AG04450 (cell line): ENCODE measurements at regions of chr12 and their contacts with region 1.

Region 1: DNA sequence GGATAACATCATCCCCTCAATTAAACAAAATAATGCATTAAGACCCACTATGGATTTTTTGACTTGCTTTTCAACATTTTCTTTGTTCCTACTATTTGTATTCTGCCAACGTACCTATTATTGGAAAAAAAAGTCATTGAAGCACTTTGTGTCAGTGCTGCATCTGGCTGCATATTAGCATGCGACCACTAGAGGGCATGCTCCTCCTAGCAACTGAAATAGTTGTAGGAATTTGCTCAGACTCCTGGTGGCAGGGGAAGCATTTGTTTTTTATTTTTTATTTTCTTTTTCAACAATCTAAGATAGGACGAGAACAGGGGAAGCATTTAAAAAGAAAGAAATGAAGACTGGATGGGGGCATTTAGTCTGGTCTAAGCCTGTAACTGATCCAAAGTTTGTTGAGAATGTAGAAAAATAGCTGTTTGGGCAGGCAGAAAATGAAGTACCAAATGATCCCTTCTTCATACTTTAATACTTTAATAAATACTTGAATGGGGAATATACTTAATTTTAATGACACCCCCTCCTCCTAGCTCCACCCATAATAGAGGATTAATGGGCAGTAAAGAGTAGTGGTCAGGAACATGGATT is 14.5 kb upstream of the CLEC4A start:
- DNase-seq: peak; percentile 63
- H3K4me3 ChIP-seq: no peak overlapping the region
- H3K27ac ChIP-seq: no peak overlapping the region
- H3K27me3 ChIP-seq: no peaks in the 10 kb centered on the region
- CTCF ChIP-seq: peak; percentile 100

Region 2: GRCh38 chr12:7869127-7869526 is 239.8 kb before region 1 on chr12:
- CTCF ChIA-PET with region 1: no interaction called
- POLR2A ChIA-PET with region 1: no interaction called
- DNase-seq: no peak
- H3K4me3 ChIP-seq: no peak overlapping the region
- H3K27ac ChIP-seq: no peak overlapping the region
- H3K27me3 ChIP-seq: peaks cover 7% of the 10 kb centered on the region
- CTCF ChIP-seq: no peak

Region 3: DNA sequence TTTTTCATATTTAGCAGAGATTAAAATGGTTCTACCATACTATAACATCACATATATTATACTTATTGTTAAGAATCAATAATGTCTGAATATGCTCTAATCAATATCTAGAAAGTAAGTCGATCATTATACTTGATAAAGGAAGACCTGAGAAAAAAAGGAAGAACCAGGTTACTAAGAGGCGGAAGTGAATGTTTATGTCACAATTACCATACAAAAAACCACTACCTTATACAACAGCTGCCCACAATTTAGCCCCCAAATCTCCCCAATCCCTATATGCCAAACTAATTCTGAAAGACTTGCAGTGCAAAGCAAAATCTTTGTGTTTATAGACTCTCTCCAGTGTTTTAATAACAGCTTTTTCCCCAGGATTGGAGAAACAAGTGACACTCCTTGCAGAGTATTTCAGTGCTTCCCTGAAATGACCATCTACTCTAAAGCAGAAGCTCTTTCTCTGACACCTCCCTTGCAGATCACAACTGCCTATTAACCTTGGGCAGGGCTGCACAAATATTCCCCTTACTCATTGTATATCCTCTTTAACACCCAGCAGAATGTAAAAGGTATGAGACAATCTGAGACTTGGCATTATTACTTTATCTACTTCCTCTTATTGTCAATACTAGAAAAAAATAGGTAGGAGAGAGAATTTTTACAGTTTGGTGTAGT is 160.2 kb before region 1 on chr12:
- CTCF ChIA-PET with region 1: no interaction called
- POLR2A ChIA-PET with region 1: no interaction called
- DNase-seq: no peak
- H3K4me3 ChIP-seq: no peak overlapping the region
- H3K27ac ChIP-seq: no peak overlapping the region
- H3K27me3 ChIP-seq: no peaks in the 10 kb centered on the region
- CTCF ChIP-seq: no peak

Region 4: DNA sequence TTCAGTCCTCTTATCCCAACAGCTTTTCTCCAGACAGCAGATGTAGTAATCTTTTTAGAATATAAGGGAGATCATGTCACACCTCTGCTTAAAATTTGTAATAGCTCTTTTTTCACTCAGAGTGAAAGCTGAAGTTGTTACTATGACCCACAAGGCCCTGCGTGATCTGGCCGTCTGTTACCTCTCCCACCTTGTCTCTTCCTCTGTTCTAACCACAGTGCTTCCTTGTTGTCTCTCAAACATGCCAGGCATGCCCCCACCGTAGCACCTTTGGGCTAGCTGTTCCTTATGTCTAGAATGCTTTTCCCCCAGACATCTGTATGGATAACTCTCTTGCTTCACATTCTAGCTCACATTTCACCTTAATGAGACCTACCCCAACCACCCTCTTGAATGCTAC is 20.3 kb before region 1 on chr12:
- CTCF ChIA-PET with region 1: interaction called, 10 read pairs
- POLR2A ChIA-PET with region 1: no interaction called
- DNase-seq: no peak
- H3K4me3 ChIP-seq: no peak overlapping the region
- H3K27ac ChIP-seq: no peak overlapping the region
- H3K27me3 ChIP-seq: no peaks in the 10 kb centered on the region
- CTCF ChIP-seq: no peak

Region 5: GRCh38 chr12:8120072-8120713 is 11.3 kb after region 1 on chr12:
- CTCF ChIA-PET with region 1: interaction called, 12 read pairs
- POLR2A ChIA-PET with region 1: no interaction called
- DNase-seq: no peak
- H3K4me3 ChIP-seq: no peak overlapping the region
- H3K27ac ChIP-seq: no peak overlapping the region
- H3K27me3 ChIP-seq: no peaks in the 10 kb centered on the region
- CTCF ChIP-seq: no peak

Region 6: GRCh38 chr12:8127138-8127537 is 18.2 kb after region 1 on chr12:
- CTCF ChIA-PET with region 1: interaction called, 23 read pairs
- POLR2A ChIA-PET with region 1: interaction called, 5 read pairs
- DNase-seq: no peak
- H3K4me3 ChIP-seq: no peak overlapping the region
- H3K27ac ChIP-seq: no peak overlapping the region
- H3K27me3 ChIP-seq: no peaks in the 10 kb centered on the region
- CTCF ChIP-seq: no peak

Region 7: GRCh38 chr12:8146442-8146771 is 37.5 kb after region 1 on chr12:
- CTCF ChIA-PET with region 1: interaction called, 11 read pairs
- POLR2A ChIA-PET with region 1: no interaction called
- DNase-seq: no peak
- H3K4me3 ChIP-seq: peak overlapping the region; percentile 21; the same call in 1 of the 2 replicates
- H3K27ac ChIP-seq: peak overlapping the region; percentile 66
- H3K27me3 ChIP-seq: no peaks in the 10 kb centered on the region
- CTCF ChIP-seq: no peak

Region 8: GRCh38 chr12:8156845-8157244 is 47.9 kb after region 1 on chr12 and contains the start of gene ZNF705A:
- CTCF ChIA-PET with region 1: interaction called, 17 read pairs
- POLR2A ChIA-PET with region 1: no interaction called
- DNase-seq: peak; percentile 59
- H3K4me3 ChIP-seq: no peak within 1 kb of the TSS
- H3K27ac ChIP-seq: peak within 1 kb of the TSS; percentile 74
- H3K27me3 ChIP-seq: no peaks in the 10 kb centered on the region
- CTCF ChIP-seq: no peak
- polyA plus RNA-seq, gene ZNF705A: not detected in 2 replicates

Region 9: DNA sequence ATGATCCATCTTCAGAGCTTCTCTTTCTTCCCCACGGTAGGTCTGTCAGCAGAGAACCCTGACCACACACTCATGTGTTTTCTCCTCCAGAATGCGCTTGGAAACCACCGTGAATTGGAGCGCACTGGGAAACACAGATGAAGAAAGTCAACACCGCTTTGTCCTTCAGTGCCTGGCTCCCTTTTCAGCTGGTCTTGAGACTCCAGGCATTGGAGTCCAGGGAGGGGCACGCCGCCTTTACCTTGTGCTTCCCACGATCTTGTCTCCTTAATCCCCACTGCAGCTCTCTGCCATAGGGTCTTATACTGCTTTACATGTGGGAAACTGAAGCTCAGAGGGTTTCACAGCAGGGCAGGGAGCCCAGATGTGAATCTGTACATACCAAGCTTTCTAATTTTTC is 117.5 kb after region 1 on chr12:
- CTCF ChIA-PET with region 1: interaction called, 52 read pairs
- POLR2A ChIA-PET with region 1: no interaction called
- DNase-seq: no peak
- H3K4me3 ChIP-seq: no peak overlapping the region
- H3K27ac ChIP-seq: no peak overlapping the region
- H3K27me3 ChIP-seq: no peaks in the 10 kb centered on the region
- CTCF ChIP-seq: no peak